ENCODE measurements at regions of chr1 and their contacts with region 1.

Region 1: GRCh38 chr1:160795951-160796383 is at the start of gene LY9:
- DNase-seq: peak; percentile 47 to 95 (median 86)
- ATAC-seq: peak; percentile 86 to 92
- H3K4me3 Mint-ChIP-seq: peak within 1 kb of the TSS; percentile 86 to 99 (median 96)
- H3K27ac Mint-ChIP-seq: peak within 1 kb of the TSS; percentile 92 to 99 (median 98)
- H3K4me1 Mint-ChIP-seq: peaks cover 26 to 68% (median 42%) of the 10 kb centered on the region in 4 donors
- H3K27me3 Mint-ChIP-seq: no peaks in the 10 kb centered on the region
- polyA plus RNA-seq, gene LY9: 167 to 223 (median 189) TPM

Region 2: DNA sequence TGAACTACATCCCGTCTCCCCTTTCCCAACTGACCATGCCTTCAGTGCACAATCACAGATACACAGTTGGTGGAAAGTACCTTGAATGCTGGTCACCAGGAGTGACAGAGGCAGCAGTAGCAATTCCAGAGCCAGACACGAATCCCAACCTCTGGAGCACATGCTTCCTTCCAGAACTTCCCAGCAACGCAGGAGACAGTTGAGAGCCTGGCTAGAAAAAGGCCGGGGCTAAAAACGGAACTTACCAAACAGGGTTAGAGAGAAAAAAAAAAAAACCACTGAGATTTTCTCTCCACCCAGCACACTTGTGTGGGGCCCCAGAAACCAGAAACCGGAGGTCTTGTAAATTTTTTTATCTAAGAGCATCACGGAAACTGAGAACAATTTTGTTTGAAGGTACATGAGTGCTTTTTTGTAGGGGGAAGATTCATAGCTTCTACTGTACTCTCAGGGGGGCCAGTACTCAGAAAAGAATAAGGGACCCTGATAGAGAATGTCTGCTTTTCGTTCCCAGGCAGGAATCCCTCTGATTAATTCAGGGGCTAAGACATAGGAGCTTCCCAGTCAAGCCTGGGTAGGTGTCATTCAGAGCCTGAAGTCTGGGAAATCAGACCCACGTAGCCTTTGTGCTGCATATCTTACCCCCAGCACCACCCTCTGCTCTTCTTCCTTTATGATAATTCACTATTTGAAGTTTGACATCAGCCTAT is 84.2 kb before region 1 on chr1 and contains the start of gene CD48:
- POLR2A ChIA-PET with region 1: interaction called, 10 read pairs
- DNase-seq: peak; percentile 26 to 88 (median 64)
- ATAC-seq: peak; percentile 60 to 67
- H3K4me3 Mint-ChIP-seq: no peak within 1 kb of the TSS
- H3K27ac Mint-ChIP-seq: peak within 1 kb of the TSS in 2 of 10 donors; percentile 87 to 95
- H3K4me1 Mint-ChIP-seq: peaks cover 11 to 49% (median 38%) of the 10 kb centered on the region in 4 donors
- H3K27me3 Mint-ChIP-seq: no peaks in the 10 kb centered on the region
- polyA plus RNA-seq, gene CD48: 186 to 213 (median 200) TPM

Region 3: GRCh38 chr1:160777486-160778089 is 18.4 kb before region 1 on chr1:
- POLR2A ChIA-PET with region 1: interaction called, 14 read pairs
- DNase-seq: peak in 8 of 10 donors; percentile 26 to 75 (median 61)
- ATAC-seq: peak; percentile 77 to 80
- H3K4me3 Mint-ChIP-seq: no peak overlapping the region
- H3K27ac Mint-ChIP-seq: peak overlapping the region in 4 of 10 donors; percentile 13 to 62 (median 31)
- H3K4me1 Mint-ChIP-seq: peaks cover 10 to 43% (median 15%) of the 10 kb centered on the region in 4 donors
- H3K27me3 Mint-ChIP-seq: no peaks in the 10 kb centered on the region

Region 4: GRCh38 chr1:160806109-160806665 is 10.2 kb after region 1 on chr1:
- POLR2A ChIA-PET with region 1: interaction called, 41 read pairs
- DNase-seq: peak in 1 of 10 donors; percentile 34
- ATAC-seq: peak in 1 of 2 donors; percentile 72
- H3K4me3 Mint-ChIP-seq: peak overlapping the region in 9 of 10 donors; percentile 22 to 77 (median 61)
- H3K27ac Mint-ChIP-seq: peak overlapping the region in 9 of 10 donors; percentile 16 to 85 (median 75)
- H3K4me1 Mint-ChIP-seq: peaks cover 42 to 89% (median 83%) of the 10 kb centered on the region in 4 donors
- H3K27me3 Mint-ChIP-seq: no peaks in the 10 kb centered on the region

Region 5: DNA sequence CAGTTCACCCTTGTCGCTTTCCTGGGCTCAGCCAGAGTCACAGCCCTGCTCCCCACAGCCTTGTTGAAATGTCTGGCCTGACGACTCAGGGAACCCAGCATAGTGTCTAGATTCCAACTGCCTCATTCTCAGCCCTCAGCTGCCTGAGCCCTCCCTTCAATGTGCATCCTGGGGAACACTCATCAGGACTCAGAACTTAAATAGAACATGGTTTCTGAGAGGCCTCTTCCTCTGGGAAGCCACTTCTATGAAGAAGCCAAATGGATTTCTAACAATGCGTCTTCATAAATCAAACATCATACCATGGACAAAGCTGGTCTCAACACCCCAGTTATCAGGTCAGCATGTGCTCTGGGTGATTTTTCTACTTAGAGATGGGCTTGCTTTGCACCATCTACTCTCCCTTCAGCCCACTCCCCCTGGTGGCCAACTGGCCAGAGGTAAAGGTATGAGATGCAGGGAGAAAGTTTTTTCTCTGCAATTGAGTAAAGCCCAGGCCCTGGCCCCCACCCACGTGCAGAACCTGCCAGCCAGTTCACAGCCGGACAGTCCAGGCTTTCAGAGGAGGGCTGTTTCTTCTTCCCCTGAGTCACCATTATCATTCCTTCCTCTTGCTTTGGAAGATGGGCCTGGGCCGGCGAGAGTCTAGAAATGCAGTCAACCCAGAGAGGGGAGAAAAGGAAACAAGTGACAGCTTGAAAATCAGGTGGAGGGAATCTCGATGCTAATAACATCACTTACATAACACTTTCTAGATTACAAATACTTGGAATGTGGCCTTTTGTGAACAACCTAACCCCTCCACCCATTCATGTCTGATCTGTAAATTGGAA is 34.6 kb after region 1 on chr1:
- POLR2A ChIA-PET with region 1: interaction called, 65 read pairs
- DNase-seq: peak; percentile 47 to 89 (median 68)
- ATAC-seq: peak; percentile 80 to 86
- H3K4me3 Mint-ChIP-seq: no peak overlapping the region
- H3K27ac Mint-ChIP-seq: peak overlapping the region; percentile 68 to 95 (median 88)
- H3K4me1 Mint-ChIP-seq: peaks cover 29 to 57% (median 47%) of the 10 kb centered on the region in 4 donors
- H3K27me3 Mint-ChIP-seq: no peaks in the 10 kb centered on the region

Region 6: GRCh38 chr1:160837558-160838205 is 41.7 kb after region 1 on chr1:
- POLR2A ChIA-PET with region 1: interaction called, 65 read pairs
- DNase-seq: peak; percentile 66 to 93 (median 86)
- ATAC-seq: peak; percentile 96 to 98
- H3K4me3 Mint-ChIP-seq: peak overlapping the region; percentile 73 to 92 (median 86)
- H3K27ac Mint-ChIP-seq: peak overlapping the region; percentile 85 to 96 (median 94)
- H3K4me1 Mint-ChIP-seq: peaks cover 43 to 93% (median 85%) of the 10 kb centered on the region in 4 donors
- H3K27me3 Mint-ChIP-seq: no peaks in the 10 kb centered on the region

Region 7: GRCh38 chr1:160981584-160982411 is 185.8 kb after region 1 on chr1:
- POLR2A ChIA-PET with region 1: no interaction called
- DNase-seq: peak in 4 of 10 donors; percentile 2 to 21 (median 11)
- ATAC-seq: peak; percentile 87 to 93
- H3K4me3 Mint-ChIP-seq: peak overlapping the region; percentile 50 to 78 (median 66)
- H3K27ac Mint-ChIP-seq: peak overlapping the region in 1 of 10 donors; percentile 93
- H3K4me1 Mint-ChIP-seq: peaks cover 5 to 12% (median 12%) of the 10 kb centered on the region in 4 donors
- H3K27me3 Mint-ChIP-seq: peaks cover 18 to 35% (median 26%) of the 10 kb centered on the region in 5 donors

Region 8: DNA sequence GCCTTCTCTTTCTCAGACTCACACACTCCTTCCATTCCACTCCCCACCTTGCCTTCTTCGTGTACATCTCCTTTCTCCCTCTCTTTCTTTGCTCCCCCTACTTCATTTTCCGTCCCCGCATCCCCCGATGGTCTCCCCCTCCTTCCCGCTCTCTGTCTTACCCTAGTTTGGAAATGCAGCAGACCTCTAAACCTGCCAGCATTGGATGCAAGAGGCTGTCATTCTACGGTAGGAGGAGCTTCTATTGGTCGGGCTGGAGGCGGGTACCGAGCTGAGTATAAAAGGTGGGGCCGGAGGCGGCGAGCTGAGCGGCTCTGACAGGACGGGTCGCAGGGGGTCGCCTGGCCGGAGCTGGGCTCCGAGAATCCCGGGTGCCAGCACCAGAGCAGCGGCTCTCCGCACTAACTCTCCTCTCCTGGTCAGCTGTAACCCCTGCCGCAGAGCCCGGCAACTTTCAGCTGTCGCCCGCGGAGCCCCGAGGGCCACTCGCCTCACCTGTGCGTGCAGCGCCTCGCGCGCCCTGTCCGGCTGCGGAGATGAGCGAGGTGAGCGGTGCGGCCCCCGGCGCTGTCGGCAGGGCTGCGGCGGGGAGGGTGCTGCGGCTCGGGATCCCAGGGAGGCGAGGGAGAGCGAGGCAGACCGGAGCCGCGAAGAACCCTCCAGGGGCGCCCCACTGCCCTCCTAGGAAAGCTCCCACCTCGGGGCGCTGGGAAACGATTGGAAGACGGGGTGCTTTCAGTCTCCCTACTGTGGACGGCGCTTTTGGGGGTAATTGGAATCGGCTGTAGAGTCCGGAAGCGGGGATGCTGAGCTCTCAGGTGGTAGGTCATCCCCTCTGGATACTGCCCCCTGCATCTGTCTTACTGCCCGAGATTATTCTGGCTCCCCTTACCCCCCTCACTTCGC is 462.7 kb after region 1 on chr1 and contains the start of gene PCP4L1:
- POLR2A ChIA-PET with region 1: no interaction called
- DNase-seq: peak; percentile 4 to 70 (median 21)
- ATAC-seq: peak; percentile 90 to 91
- H3K4me3 Mint-ChIP-seq: peak within 1 kb of the TSS; percentile 46 to 82 (median 76)
- H3K27ac Mint-ChIP-seq: peak within 1 kb of the TSS in 3 of 10 donors; percentile 43 to 83 (median 71)
- H3K4me1 Mint-ChIP-seq: peaks cover 11 to 37% (median 24%) of the 10 kb centered on the region in 4 donors
- H3K27me3 Mint-ChIP-seq: peaks cover 26 to 77% (median 62%) of the 10 kb centered on the region in 5 donors
- polyA plus RNA-seq, gene PCP4L1: not detected